ENCODE measurements at regions of chr11 and their contacts with region 1.

Region 1: GRCh38 chr11:73982969-73983740 is 512 bp upstream of the UCP2 start:
- DNase-seq: peak; percentile 96
- H3K4me3 ChIP-seq: peak overlapping the region; percentile 11 to 73 (median 56)
- H3K27ac ChIP-seq: peak overlapping the region; percentile 71
- H3K4me1 ChIP-seq: peaks cover 11% of the 10 kb centered on the region
- H3K27me3 ChIP-seq: no peaks in the 10 kb centered on the region
- CTCF ChIP-seq: no peak
- POLR2A ChIP-seq: peak; percentile 84

Region 2: GRCh38 chr11:74014880-74015279 is 31.7 kb after region 1 on chr11:
- CTCF ChIA-PET with region 1: no interaction called
- POLR2A ChIA-PET with region 1: no interaction called
- dilution Hi-C with region 1: no loop called
- intact Hi-C with region 1: no loop called
- DNase-seq: no peak
- H3K4me3 ChIP-seq: no peak overlapping the region
- H3K27ac ChIP-seq: no peak overlapping the region
- H3K4me1 ChIP-seq: no peaks in the 10 kb centered on the region
- H3K27me3 ChIP-seq: no peaks in the 10 kb centered on the region
- CTCF ChIP-seq: no peak
- POLR2A ChIP-seq: no peak

Region 3: DNA sequence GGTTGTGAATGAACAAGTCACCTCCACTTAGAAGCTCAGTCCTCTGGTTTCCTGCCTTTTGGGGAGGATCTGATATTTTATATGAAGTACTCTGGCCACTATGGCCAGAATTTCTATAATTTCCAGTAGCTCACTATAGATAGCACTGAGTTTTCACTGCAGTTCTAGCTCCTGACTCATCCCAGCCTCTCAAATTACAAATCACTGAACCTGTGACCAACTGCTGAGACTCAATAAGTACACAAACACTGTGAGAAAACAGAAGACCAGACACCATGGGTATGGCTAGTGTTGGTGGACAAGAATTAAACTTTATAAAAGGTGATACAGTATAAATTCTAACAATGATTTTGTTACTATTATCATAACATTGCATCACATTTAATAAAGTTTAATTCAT is 72.8 kb after region 1 on chr11:
- CTCF ChIA-PET with region 1: no interaction called
- POLR2A ChIA-PET with region 1: no interaction called
- dilution Hi-C with region 1: no loop called
- intact Hi-C with region 1: no loop called
- DNase-seq: no peak
- H3K4me3 ChIP-seq: no peak overlapping the region
- H3K27ac ChIP-seq: no peak overlapping the region
- H3K4me1 ChIP-seq: peaks cover 5% of the 10 kb centered on the region
- H3K27me3 ChIP-seq: no peaks in the 10 kb centered on the region
- CTCF ChIP-seq: no peak
- POLR2A ChIP-seq: no peak

Region 4: DNA sequence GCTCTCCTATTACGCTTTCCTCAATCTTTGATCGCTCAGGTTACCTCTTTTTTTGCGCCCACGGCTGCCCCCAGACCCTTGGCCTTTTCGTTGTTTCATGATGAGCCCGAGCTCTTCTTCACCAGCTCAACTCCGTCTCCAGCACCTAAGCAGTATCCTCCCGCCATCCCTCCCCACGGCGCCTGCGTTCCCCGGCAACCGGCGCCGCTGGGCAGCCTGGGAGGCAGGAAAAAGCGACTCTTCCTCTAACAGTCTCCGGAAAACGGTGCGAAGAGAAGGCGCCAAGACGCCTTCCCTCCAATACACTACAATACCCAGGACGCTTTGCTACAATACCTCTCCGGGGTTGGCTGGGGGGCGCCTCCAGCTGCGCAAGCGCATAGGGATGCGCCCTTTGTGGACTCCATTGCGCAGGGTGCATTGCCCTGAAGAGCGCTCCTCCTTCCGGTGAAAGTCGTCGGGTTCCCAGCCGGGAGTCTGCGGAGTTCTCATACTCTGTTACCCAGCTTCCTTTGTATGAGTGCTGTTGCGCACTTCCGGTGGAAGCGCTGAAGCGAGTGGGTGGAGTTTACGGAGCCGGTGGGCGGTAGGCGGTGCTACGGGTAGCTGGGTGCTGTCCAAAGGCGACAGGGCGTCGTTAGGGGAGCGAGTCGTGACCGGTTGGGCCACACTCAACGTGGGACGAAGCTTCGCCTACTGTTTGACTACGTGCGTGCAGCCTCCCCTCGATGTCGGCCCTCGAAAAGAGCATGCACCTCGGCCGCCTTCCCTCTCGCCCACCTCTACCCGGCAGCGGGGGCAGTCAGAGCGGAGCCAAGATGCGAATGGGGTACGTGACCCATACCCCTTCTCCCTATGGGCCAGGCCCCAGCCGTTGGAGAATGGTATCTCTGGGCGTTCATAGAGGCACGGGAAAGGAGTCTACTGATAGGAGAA is 187.8 kb after region 1 on chr11 and contains the starts of genes C2CD3 and PPME1:
- CTCF ChIA-PET with region 1: interaction called, 5 read pairs
- POLR2A ChIA-PET with region 1: interaction called, 5 read pairs
- dilution Hi-C with region 1: no loop called
- intact Hi-C with region 1: loop called (anchors 2 kb)
- DNase-seq: peak; percentile 100
- H3K4me3 ChIP-seq: peak within 1 kb of the TSS; percentile 67 to 93 (median 74)
- H3K27ac ChIP-seq: peak within 1 kb of the TSS; percentile 84
- H3K4me1 ChIP-seq: peaks cover 17% of the 10 kb centered on the region
- H3K27me3 ChIP-seq: no peaks in the 10 kb centered on the region
- CTCF ChIP-seq: peak in 1 of 2 donors; percentile 5
- POLR2A ChIP-seq: no peak
- total RNA-seq, gene C2CD3: 26.2 and 36.6 TPM in 2 replicates
- total RNA-seq, gene PPME1: 35.0 and 37.2 TPM in 2 replicates

Measured in endothelial cell of umbilical vein (primary cell).